ENCODE measurements at regions of chr21 and their contacts with region 1.

Region 1: DNA sequence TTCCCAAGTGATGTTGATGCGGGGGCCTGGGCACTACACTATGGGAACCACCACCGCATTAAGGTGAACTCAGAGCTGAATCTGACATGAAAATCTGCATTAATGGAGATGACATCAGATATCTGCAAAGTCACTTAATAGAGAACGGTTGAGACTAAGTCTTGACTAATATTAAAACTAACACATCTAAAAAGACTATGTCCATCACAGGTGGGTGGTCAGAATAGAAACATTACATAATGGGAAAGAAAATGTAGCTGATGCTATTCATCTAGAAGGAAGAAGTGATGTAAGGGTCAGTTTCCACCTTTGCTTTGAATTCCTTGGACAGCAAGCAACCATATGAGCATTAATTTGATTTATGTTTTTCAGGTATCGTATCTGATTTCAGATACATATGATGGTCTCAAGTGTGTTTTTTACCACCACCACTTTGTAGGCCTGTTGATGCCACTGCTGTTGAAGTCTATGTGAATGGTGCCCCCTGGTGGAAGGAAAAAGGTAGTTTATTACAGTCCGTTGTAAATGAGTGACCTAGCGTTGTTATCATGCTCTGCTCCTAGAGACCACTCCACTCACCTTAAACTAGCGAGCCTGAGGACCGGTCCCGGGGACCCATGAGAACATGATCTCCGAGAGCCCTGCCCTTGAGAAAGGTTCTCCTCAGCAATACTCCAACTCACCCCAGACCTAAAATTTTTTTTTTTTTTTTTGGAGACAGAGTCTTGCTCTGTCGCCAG is 73.5 kb downstream of the BACH1 start:
- DNase-seq: no peak

Region 2: DNA sequence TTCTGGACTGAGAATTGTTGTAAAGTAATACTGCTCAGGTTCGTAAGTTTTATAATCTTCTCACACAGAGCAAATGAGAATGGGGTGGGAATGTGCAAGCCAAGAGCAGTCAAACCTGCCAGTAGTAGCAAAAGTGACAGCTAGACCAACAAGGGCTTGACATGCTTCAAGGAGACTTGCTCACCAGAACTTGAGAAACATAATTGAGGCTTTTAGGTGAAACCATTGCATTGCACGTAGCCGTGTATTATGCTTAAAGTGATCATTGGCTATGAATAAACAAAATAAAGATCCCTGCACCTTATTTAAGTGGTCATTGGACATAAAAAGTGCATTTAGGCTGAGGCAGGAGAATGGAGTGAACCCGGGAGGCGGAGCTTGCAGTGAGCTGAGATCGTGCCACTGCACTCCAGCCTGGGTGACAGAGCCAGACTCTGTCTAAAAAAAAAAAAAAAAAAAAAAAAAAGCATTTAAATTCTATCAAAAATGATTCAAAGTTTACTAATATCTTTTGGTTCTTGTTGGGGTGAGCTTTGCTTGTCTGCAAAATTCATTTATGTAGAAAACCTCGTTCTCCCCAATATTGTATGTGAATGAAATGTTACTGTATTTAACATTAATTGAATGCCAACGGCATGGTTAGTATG is 287.0 kb before region 1 on chr21:
- intact Hi-C with region 1: loop called (anchors 5 to 10 kb)
- DNase-seq: no peak

Region 3: DNA sequence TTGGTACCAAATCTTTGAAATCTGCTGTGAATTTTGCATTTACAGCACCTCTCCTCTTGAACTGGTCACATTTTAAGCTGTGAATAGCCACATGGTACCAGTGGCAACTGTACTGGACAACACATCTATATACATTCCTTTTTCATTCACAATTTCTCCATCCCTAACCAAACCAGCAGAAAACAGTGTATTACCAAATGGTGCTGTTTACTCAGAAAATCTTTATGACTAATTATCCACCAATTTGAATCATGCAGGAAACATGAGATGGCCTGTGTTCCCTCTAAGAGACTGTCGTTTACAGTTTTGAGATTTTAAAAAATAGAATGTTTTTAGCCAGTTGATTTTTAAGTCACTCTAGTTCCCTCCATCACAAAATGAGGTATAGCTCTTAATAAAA is 281.2 kb before region 1 on chr21:
- intact Hi-C with region 1: loop called (anchors 5 to 10 kb)
- DNase-seq: no peak

Region 4: GRCh38 chr21:29164325-29164942 is 207.8 kb before region 1 on chr21:
- intact Hi-C with region 1: loop called (anchors 10 kb)
- DNase-seq: no peak